Calu3 (cell line): ENCODE measurements at regions of chr4 and their contacts with region 1.

Region 1: DNA sequence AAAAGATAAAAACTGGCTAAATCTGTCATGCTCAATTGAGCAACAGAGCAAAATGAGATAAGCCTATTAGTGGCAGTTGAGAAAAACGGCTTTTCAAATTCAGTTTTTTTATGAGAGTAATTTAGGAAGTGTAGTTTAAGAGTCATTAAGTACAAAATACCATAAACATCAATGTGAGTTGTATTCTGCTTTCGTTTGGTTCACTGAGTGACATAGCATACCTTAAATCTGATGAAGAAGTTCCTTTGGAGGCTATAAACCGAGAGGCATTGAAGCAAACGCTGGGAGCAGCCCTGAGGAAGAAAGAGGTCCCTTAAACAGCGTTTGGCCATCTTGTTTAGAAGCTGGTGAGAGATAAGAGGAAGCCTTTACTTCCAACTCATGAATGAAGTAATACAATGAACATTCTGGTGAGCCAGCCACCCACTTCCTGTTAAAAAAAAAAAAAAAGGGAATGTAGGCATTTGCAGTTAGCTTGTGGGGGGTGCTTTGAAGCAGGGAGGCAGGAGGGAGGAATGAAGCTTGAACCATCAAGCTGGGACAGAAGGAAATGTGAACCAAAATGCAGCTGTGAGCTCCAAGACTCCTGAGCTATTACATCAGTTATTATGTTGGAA is 132.3 kb downstream of the ZNF330 start:
- DNase-seq: no peak
- H3K4me3 Mint-ChIP-seq: peak overlapping the region; percentile 32
- H3K27ac Mint-ChIP-seq: peak overlapping the region; percentile 73
- H3K4me1 Mint-ChIP-seq: peaks cover 57% of the 10 kb centered on the region
- H3K27me3 Mint-ChIP-seq: no peaks in the 10 kb centered on the region
- CTCF ChIP-seq: no peak

Region 2: DNA sequence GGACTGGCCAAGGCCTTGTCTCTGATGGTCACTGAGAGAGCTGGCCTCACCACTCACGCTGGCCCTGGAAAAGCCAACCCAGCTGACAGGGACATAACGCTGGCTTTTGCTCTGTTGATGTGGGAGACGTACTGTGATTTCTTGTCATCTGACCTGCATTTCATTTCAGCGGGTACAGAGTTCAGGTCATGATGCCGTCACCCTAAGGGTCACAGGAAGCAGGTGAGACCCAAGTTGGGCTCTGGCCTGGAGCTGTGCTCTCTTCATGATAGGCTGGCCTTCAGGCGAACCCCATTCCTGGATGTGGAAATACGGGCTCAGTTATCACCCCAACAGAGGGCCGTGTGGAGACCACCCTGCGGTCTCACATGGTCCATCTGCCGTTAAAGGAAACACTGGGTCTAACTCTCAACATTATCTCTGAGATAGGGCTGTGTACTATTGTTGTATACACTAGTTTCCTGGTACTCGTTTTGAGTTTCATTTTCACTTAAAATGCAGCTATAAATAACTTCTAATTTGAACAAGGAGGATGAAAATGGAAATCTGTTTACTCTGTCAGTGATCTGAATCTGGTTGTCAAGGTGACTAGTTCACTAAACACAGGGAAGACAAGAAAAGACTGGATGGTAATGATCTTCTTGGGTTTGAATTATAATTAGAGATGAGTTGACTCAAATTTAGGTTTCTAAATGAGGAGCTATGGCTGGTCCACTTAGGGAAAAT is 686.0 kb before region 1 on chr4:
- CTCF ChIA-PET with region 1: no interaction called
- intact Hi-C with region 1: no loop called
- DNase-seq: no peak
- H3K4me3 Mint-ChIP-seq: no peak overlapping the region
- H3K27ac Mint-ChIP-seq: no peak overlapping the region
- H3K4me1 Mint-ChIP-seq: no peaks in the 10 kb centered on the region
- H3K27me3 Mint-ChIP-seq: no peaks in the 10 kb centered on the region
- CTCF ChIP-seq: no peak

Region 3: DNA sequence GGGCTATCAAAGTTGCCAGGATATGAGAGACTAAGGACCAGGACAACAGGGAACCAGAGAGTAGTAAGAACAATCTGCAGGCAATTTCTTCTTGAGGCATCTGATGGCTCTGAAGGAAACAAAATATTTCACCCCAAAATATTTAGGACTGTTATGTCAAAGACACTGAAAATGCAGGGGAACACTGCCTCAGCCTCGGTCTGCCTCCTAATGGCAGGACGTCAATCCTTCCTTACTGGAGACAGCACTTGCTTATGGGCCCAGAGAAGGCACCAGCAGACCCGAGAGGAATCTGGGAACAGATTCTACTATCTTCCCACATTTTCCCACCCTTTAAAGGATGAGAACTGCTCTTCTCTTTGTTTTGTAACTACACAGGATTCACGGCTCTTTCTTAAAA is 243.0 kb before region 1 on chr4:
- CTCF ChIA-PET with region 1: no interaction called
- intact Hi-C with region 1: no loop called
- DNase-seq: no peak
- H3K4me3 Mint-ChIP-seq: no peak overlapping the region
- H3K27ac Mint-ChIP-seq: no peak overlapping the region
- H3K4me1 Mint-ChIP-seq: no peaks in the 10 kb centered on the region
- H3K27me3 Mint-ChIP-seq: peaks cover 40% of the 10 kb centered on the region
- CTCF ChIP-seq: no peak

Region 4: GRCh38 chr4:141294306-141294705 is 58.7 kb before region 1 on chr4:
- CTCF ChIA-PET with region 1: no interaction called
- intact Hi-C with region 1: no loop called
- DNase-seq: no peak
- H3K4me3 Mint-ChIP-seq: no peak overlapping the region
- H3K27ac Mint-ChIP-seq: no peak overlapping the region
- H3K4me1 Mint-ChIP-seq: no peaks in the 10 kb centered on the region
- H3K27me3 Mint-ChIP-seq: no peaks in the 10 kb centered on the region
- CTCF ChIP-seq: no peak

Region 5: DNA sequence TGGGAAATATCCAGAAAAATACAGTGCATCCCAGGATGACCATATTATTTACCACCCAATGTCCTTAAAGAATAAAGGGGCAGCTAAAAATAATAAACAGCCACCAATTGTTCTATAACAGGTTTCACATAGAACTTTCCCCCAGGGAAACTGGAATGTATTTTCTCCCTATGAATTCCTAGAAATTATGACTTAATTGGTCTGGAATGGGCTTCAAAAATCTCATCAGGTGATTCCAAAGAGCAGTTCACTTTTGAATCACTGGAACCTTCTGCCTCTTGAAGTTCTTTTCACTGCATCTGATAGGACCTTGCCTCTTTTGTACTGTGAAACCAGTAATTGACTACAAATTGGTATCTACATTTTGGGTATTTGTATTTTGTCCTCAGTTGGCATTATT is 13.1 kb before region 1 on chr4:
- CTCF ChIA-PET with region 1: no interaction called
- intact Hi-C with region 1: no loop called
- DNase-seq: no peak
- H3K4me3 Mint-ChIP-seq: peak overlapping the region; percentile 75
- H3K27ac Mint-ChIP-seq: no peak overlapping the region
- H3K4me1 Mint-ChIP-seq: peaks cover 24% of the 10 kb centered on the region
- H3K27me3 Mint-ChIP-seq: no peaks in the 10 kb centered on the region
- CTCF ChIP-seq: no peak

Region 6: DNA sequence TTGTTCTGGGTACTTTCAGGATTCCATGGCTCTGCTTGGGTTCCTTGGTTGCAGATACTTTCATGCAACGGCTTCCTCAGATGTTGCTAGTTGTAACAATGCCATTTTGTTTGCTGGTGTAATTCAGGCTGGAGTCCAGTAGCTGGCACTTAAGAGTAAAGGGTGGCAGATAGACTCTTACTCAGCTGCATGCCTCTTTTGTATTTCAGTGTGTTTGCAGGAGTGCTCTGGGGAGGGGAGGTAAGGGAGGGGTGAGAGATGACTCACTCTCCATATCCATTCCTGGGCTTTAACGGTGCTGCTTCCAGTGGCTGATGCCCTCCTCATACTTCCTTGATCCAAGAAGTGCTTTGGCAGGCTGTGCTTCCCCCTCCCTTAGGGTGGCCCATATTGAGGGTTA is 22.8 kb after region 1 on chr4:
- CTCF ChIA-PET with region 1: interaction called, 4 read pairs
- intact Hi-C with region 1: loop called (anchors 1 kb)
- DNase-seq: peak; percentile 63
- H3K4me3 Mint-ChIP-seq: peak overlapping the region; percentile 29
- H3K27ac Mint-ChIP-seq: peak overlapping the region; percentile 57
- H3K4me1 Mint-ChIP-seq: peaks cover 13% of the 10 kb centered on the region
- H3K27me3 Mint-ChIP-seq: no peaks in the 10 kb centered on the region
- CTCF ChIP-seq: peak; percentile 12